ENCODE measurements at regions of chr1 and their contacts with region 1.

Region 1: GRCh38 chr1:1615256-1616044 is at the start of gene MIB2:
- DNase-seq: peak; percentile 96 to 99 (median 97)
- ATAC-seq: peak; percentile 91 to 95 (median 94)
- H3K4me3 ChIP-seq: peak within 1 kb of the TSS; percentile 81 to 100 (median 97)
- H3K27ac ChIP-seq: peak within 1 kb of the TSS; percentile 99 to 100 (median 100)
- H3K4me1 ChIP-seq: peaks cover 4 to 49% (median 32%) of the 10 kb centered on the region in 12 donors
- H3K27me3 ChIP-seq: no peaks in the 10 kb centered on the region
- CTCF ChIP-seq: no peak
- POLR2A ChIP-seq: peak in 1 of 2 donors; percentile 84
- total RNA-seq, gene MIB2: 59.2 to 114 (median 76.3) TPM

Region 2: GRCh38 chr1:1574721-1575537 is 40.5 kb before region 1 on chr1 and contains the start of gene SSU72:
- intact Hi-C with region 1: loop called in 5 of 10 experiments (anchors 1 to 5 kb)
- DNase-seq: peak; percentile 93 to 96 (median 94)
- ATAC-seq: peak; percentile 91 to 96 (median 95)
- H3K4me3 ChIP-seq: peak within 1 kb of the TSS; percentile 73 to 100 (median 99)
- H3K27ac ChIP-seq: peak within 1 kb of the TSS; percentile 90 to 100 (median 98)
- H3K4me1 ChIP-seq: peaks cover 0 to 41% (median 22%) of the 10 kb centered on the region in 12 donors
- H3K27me3 ChIP-seq: peaks cover 0 to 4% (median 0%) of the 10 kb centered on the region in 9 donors
- CTCF ChIP-seq: no peak
- POLR2A ChIP-seq: peak; percentile 41 to 79
- total RNA-seq, gene SSU72: 76.3 to 160 (median 106) TPM

Region 3: GRCh38 chr1:1630271-1630964 is 15.0 kb after region 1 on chr1:
- intact Hi-C with region 1: loop called in 1 of 10 experiments (anchors 2 kb)
- DNase-seq: peak; percentile 63 to 90 (median 72)
- ATAC-seq: peak in 3 of 4 donors; percentile 3 to 17 (median 6)
- H3K4me3 ChIP-seq: peak overlapping the region in 10 of 12 donors; percentile 24 to 55 (median 43)
- H3K27ac ChIP-seq: peak overlapping the region; percentile 20 to 94 (median 80)
- H3K4me1 ChIP-seq: peaks cover 0 to 33% (median 6%) of the 10 kb centered on the region in 12 donors
- H3K27me3 ChIP-seq: peaks cover 0 to 29% (median 8%) of the 10 kb centered on the region in 9 donors
- CTCF ChIP-seq: no peak
- POLR2A ChIP-seq: no peak

Region 4: DNA sequence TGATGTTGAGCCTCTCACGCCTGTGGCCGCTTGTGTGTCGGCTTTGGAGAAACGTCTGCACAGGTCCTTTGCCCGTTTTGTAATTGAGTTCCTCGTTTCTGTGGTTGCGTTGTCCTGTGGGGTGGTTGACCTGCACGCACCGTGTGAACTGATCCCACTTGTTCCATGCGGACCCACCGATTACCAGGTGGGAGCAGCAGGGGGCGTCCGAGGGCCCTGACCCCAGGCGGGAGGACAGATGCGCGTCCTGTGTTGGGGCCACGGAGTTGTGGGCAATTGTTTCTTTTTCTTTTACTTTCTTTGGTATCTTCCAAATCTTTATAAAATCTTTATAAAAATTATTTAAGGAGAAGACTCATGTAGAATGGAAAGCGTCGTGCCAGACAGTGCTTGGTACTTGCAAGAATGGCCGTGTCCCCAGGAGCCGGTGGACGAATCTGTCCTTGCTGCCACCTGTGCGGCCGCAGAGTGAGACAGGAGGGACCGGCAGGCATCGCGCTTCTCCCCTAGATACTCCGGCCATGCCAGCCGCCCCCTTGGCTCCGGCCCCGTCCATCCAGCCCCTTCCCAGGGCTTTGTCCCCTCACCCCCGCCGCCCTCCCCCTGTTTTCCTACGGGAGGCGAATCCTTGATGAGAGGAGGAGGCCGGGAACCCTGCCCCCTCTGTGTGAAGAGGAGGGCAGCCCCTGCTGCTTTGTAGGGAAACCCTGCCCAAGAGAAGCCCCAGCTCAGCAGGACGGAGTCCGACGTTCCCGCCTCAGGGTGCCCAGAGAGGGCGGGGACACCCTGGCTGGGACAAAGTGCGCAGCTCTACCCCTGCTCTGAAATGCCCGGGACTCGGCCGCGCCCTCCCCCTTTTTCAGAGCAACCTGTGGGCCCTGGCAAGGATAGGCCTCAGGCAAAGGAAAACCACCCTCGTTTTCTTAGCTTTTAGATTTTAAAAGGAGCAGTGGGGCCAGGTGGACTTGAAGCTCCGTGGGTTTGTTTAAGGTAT is 476.5 kb after region 1 on chr1:
- intact Hi-C with region 1: no loop called
- DNase-seq: peak in 4 of 5 donors; percentile 31 to 77 (median 48)
- ATAC-seq: peak in 1 of 4 donors; percentile 48
- H3K4me3 ChIP-seq: no peak overlapping the region
- H3K27ac ChIP-seq: no peak overlapping the region
- H3K4me1 ChIP-seq: peaks cover 0 to 8% (median 0%) of the 10 kb centered on the region in 12 donors
- H3K27me3 ChIP-seq: no peaks in the 10 kb centered on the region
- CTCF ChIP-seq: peak; percentile 34 to 70 (median 54)
- POLR2A ChIP-seq: no peak